ENCODE measurements at regions of chr1 and their contacts with region 1.

Region 1: DNA sequence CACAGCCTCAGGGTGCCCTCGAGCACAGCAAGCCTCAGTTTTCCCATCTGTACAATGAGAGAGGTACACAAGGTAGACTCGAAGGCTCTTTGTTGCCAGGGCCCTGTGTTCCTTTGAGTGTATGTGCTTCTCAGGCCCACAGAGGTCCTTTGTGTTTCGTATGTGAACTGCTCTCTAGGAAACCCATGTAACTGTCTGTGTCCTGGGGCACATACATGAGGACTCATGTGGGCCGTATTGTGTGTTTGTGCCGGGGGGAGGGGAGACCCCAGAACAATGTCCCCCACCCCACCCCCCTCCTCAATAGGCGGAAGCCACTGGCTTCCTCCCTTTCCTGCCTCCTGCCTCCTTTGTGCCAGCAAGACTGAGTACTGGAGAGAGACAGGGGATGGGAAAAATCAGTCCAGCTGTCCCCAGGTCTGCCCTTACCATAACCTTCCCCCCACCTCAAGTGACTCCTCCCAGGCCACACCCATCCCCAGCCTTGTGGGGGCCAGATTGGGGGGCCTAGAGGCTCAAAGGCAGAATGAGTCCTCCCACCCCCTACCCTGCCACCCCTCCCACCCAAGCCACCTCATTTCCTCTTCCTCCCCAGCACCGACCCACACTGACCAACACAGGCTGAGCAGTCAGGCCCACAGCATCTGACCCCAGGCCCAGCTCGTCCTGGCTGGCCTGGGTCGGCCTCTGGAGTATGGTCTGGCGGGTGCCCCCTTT is at the start of gene TIE1:
- DNase-seq: peak; percentile 82
- total RNA-seq, gene TIE1: 27.7 TPM

Region 2: GRCh38 chr1:43238085-43238484 is 62.5 kb before region 1 on chr1:
- intact Hi-C with region 1: loop called (anchors 5 kb)
- DNase-seq: no peak

Region 3: DNA sequence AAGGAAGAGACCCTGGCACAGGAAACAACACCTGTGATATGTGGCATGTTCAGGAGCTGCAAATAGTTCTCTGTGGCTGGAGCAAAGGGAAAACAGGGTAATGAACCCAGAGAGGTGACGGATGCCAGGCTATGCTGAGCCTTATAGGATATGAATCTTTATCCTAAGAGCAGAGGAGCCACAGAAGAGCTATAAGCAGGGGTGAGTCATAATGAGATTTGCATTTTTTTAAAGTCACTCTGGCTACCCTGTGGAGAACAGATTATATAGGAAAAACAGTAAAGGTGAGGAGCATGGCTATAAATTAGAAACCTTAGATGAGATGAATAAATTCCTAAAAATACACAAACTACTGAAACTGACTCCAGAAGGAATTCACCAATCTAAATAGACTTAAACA is 24.3 kb after region 1 on chr1:
- intact Hi-C with region 1: loop called (anchors 1 kb)
- DNase-seq: no peak

Region 4: GRCh38 chr1:43345120-43345519 is 44.6 kb after region 1 on chr1:
- intact Hi-C with region 1: loop called (anchors 2 kb)
- DNase-seq: peak; percentile 10

Region 5: GRCh38 chr1:43554444-43554992 is 254.0 kb after region 1 on chr1:
- intact Hi-C with region 1: no loop called
- DNase-seq: no peak